ENCODE measurements at regions of chr18 and their contacts with region 1.

Region 1: DNA sequence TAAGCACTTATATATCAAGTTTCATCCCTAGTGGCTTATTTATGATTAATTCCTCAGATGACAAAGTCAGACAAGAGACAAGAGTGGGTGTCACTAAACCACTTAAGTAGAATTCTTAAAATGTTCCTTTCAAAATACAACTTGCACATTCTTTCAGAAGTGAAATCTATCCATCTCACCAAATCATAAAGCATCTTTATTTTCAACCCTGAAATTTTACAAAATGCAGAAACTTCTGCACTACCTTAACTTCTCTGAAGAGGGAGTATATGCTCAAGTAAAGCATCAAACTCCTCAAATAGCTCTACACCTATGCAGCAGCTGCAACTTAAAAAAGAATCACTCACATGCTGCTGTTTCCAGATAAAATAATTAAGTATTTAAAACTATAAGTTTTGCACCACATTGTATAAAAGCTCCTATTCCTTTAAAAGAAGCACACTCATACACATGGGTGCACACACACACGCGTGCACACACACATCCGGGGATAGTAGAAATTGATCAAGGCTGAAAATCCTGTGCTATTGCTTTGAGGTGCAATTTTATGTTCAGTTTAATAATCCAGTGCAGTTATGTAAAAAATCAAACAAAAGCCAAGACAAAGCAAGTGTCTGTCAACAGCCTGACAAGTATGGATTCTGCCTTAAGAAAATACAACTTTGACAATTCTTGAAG is 244.5 kb downstream of the TCF4 start:
- DNase-seq: no peak
- ATAC-seq: peak; percentile 44

Region 2: DNA sequence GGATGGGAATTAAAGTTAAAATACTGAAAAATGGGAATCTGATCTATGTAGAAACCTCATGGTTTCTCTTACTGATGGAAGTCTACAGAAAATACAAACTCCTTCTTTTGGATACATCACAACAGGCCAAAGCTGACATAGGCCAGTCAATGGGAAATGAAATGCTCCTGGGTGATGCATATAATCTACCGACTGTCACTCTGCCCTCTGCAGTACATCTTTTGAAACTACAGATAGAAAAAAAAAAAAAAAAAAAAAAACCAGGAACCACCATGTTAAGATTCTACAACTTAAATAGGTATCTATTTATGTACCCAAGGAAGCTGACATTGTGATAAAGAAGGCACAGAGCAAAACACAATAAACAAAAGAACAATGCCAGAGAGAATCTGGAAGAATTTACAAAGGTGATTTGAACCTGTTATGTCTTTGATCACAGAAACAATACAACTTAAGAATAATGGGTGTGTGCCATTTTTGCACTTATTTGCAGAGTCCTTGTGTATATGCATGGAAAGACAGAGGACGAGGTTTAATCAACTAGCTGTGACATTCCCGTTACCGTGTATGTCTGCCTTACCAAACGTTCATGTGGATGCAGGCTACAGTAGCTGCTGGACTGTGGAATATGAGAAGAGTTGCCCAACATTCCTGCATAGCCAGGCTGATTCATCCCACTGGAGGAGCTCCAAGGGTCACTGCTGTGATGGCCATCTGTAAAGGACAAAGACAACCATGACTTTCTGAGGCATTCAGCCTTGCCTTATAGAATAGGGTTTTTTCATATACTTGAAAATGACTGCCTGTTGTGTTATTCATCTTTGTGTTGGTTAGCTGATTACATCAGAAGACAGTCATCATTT is 68.3 kb before region 1 on chr18:
- intact Hi-C with region 1: no loop called
- DNase-seq: no peak
- ATAC-seq: peak; percentile 56

Region 3: DNA sequence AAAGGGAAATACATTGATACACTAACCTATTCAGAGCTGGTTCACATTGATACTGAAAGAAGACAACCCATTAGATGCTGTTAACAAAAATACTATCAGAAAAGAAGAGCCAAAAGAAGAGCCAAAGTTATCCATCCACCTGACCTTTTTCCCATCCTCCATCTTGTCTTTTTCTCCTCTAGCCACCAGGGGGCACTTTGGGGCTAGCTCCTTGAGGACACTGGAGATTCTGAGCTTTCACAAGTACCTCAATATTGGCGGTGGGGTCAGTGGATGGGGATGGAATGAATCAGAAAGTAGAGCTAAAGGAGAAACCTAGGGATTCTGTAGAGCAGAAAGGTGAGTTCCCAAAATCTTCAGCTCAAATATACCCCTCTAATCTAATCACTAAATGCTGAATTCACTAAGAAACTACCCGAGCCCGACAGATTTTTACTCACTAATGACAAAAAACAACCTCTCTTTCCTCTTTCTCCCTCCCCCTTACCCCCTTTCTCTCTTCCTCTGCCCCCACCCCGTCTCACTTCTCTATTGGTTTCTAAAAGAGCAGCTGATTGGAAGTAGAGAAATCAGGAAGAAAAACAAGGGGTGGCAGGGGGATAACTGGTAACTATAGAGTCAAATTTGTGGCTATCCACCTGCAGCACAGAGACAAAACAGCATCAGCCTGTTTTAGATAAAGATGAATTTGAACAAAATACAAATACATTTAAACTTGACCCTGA is 41.2 kb after region 1 on chr18:
- intact Hi-C with region 1: loop called (anchors 5 kb)
- DNase-seq: no peak
- ATAC-seq: no peak

Region 4: GRCh38 chr18:55401638-55402191 is 58.2 kb after region 1 on chr18:
- intact Hi-C with region 1: loop called (anchors 5 kb)
- DNase-seq: no peak
- ATAC-seq: peak; percentile 44

Measured in Right ventricle myocardium inferior (tissue), 1 donor.